A673 (cell line): ENCODE measurements at regions of chr3 and their contacts with region 1.

Region 1: DNA sequence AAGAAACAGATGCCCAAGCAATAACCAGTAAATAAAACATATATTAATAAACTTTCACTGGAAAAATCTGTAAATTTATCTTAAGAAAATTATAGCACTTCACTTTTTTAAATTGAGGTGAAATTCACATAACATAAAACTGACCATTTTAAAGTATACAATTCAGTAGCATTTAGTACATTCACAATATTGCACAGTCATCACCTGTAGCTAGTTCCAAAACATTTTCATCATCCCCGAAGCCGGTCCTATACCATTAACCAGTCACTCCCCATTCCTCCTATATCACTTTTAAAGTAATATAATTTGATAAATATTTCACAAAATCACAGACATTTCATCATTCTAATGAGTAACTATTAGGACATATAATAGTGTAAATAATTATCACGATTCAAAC is 8.0 kb upstream of the LRRIQ4 start:
- DNase-seq: no peak
- H3K4me3 ChIP-seq: no peak overlapping the region
- H3K27ac ChIP-seq: no peak overlapping the region
- H3K4me1 ChIP-seq: no peaks in the 10 kb centered on the region
- H3K27me3 ChIP-seq: no peaks in the 10 kb centered on the region
- CTCF ChIP-seq: no peak

Region 2: GRCh38 chr3:169497567-169498257 is 307.0 kb before region 1 on chr3:
- CTCF ChIA-PET with region 1: no interaction called
- POLR2A ChIA-PET with region 1: no interaction called
- intact Hi-C with region 1: no loop called
- DNase-seq: no peak
- H3K4me3 ChIP-seq: no peak overlapping the region
- H3K27ac ChIP-seq: no peak overlapping the region
- H3K4me1 ChIP-seq: no peaks in the 10 kb centered on the region
- H3K27me3 ChIP-seq: peaks cover 55% of the 10 kb centered on the region
- CTCF ChIP-seq: no peak

Region 3: DNA sequence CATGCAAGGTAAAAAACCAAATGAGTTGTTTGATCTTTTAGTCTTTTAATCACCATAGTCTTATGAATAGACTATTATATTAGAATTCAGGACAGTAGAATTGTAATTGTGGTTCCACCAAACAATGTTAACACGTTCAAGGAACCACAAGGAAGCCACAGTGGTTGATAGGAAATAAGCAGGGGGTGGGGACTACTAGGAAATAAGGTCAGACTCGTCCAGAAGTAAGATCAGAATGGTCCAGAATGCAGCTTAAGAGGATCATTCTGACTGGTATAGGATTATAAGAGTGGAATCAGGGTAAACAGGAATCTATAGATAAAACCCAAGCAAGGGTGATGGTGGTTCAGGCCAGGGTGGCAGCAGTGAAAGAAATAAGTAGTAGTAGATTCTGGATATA is 23.9 kb before region 1 on chr3:
- CTCF ChIA-PET with region 1: no interaction called
- POLR2A ChIA-PET with region 1: interaction called, 10 read pairs
- intact Hi-C with region 1: no loop called
- DNase-seq: no peak
- H3K4me3 ChIP-seq: no peak overlapping the region
- H3K27ac ChIP-seq: no peak overlapping the region
- H3K4me1 ChIP-seq: peaks cover under 1% of the 10 kb centered on the region
- H3K27me3 ChIP-seq: no peaks in the 10 kb centered on the region
- CTCF ChIP-seq: no peak